Panc1 (cell line): ENCODE measurements at regions of chr6 and their contacts with region 1.

Region 1: DNA sequence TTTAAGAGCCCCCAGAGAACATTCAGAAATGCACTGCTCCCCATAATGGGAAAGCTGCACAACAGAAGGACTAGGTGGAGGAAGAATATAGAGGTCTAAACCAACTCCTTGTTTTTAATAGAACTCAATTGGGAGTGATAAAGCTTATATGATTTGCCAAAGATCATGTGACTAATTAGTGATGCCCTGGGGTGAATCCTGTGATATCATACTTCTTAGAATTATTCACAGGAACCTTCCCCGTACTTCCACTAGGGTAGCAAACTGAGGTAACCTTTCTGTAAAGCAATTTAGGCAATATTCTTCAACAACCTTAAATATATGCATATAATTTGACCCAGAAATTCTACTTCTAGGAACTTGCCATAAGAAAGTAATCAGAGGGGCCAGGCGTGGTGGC is 84.4 kb downstream of the TFAP2A start:
- DNase-seq: no peak
- ATAC-seq: no peak
- H3K4me3 ChIP-seq: no peak overlapping the region
- H3K27ac ChIP-seq: no peak overlapping the region
- H3K4me1 ChIP-seq: no peaks in the 10 kb centered on the region
- H3K27me3 ChIP-seq: no peaks in the 10 kb centered on the region
- CTCF ChIP-seq: no peak

Region 2: GRCh38 chr6:10276106-10276505 is 54.4 kb before region 1 on chr6:
- CTCF ChIA-PET with region 1: no interaction called
- POLR2A ChIA-PET with region 1: no interaction called
- in situ Hi-C with region 1: no loop called
- intact Hi-C with region 1: no loop called
- DNase-seq: no peak
- ATAC-seq: no peak
- H3K4me3 ChIP-seq: no peak overlapping the region
- H3K27ac ChIP-seq: no peak overlapping the region
- H3K4me1 ChIP-seq: no peaks in the 10 kb centered on the region
- H3K27me3 ChIP-seq: no peaks in the 10 kb centered on the region
- CTCF ChIP-seq: no peak

Region 3: DNA sequence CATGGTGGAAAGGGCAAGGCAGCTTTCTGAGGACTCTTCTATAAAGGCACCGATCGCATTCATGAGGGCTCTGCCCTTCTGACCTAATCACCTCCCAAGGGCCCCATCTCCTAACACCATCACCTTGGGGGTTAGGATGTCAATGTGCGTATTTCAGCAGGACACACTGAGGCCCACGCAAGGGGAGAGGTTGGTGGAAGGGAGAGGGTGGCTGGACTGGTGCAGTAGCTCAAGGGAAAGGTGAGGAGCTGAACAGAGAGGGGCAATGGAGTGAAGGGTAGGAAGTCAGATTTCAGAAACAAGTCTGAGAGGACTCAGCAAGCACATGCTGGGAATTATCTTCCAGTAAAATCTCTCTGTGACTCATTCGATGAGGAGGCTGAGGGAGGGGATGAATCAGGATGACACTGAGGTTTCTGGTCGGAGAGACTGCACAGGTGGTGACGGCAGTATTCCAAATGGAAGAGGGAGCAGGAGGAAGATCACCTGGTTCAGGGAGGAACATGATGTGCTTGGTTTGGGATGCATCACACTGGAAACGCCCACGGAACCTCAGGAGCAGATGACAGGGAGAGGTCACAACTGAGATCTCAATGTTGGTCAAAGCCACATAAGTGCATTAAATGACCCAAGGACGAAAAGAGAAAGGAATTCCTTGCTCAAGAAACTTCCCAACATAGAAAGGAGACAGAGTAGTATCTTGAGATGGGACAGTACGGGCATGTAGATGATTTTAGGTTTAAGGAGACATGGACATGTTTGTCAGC is 17.2 kb after region 1 on chr6:
- CTCF ChIA-PET with region 1: no interaction called
- POLR2A ChIA-PET with region 1: interaction called, 11 read pairs
- in situ Hi-C with region 1: no loop called
- intact Hi-C with region 1: no loop called
- DNase-seq: peak; percentile 67
- ATAC-seq: peak; percentile 77
- H3K4me3 ChIP-seq: no peak overlapping the region
- H3K27ac ChIP-seq: no peak overlapping the region
- H3K4me1 ChIP-seq: no peaks in the 10 kb centered on the region
- H3K27me3 ChIP-seq: no peaks in the 10 kb centered on the region
- CTCF ChIP-seq: no peak